PC-3 (cell line): ENCODE measurements at regions of chr14 and their contacts with region 1.

Region 1: GRCh38 chr14:70809543-70810244 is 381 bp upstream of the MAP3K9 start:
- DNase-seq: peak; percentile 98
- ATAC-seq: peak; percentile 89
- H3K4me3 ChIP-seq: peak overlapping the region; percentile 83
- H3K27ac ChIP-seq: peak overlapping the region; percentile 13
- H3K4me1 ChIP-seq: peaks cover 39% of the 10 kb centered on the region
- H3K27me3 ChIP-seq: no peaks in the 10 kb centered on the region
- CTCF ChIP-seq: no peak

Region 2: GRCh38 chr14:68896132-68896531 is 1913.6 kb before region 1 on chr14:
- CTCF ChIA-PET with region 1: no interaction called
- POLR2A ChIA-PET with region 1: interaction called, 13 read pairs
- intact Hi-C with region 1: no loop called
- DNase-seq: no peak
- ATAC-seq: no peak
- H3K4me3 ChIP-seq: no peak overlapping the region
- H3K27ac ChIP-seq: no peak overlapping the region
- H3K4me1 ChIP-seq: no peaks in the 10 kb centered on the region
- H3K27me3 ChIP-seq: no peaks in the 10 kb centered on the region
- CTCF ChIP-seq: peak; percentile 60

Region 3: DNA sequence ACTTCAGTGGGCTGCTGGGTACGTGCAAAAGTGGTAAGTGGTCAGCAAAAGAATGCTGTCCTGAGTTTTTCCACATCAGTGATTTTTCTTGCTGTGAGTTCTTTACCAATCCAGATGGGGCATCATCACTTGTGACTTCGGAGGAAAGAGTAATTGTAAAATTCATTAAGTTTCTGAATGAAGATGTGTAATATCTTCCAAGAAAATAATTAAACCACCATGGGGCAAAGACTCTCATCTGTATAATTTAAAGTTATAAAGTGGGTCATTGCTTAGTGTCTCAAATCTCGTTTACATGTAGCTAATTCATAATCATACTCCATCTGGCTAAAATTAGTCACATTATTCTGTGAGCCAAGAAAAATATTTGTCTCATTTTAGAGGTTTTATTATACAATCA is 198.5 kb before region 1 on chr14:
- CTCF ChIA-PET with region 1: no interaction called
- POLR2A ChIA-PET with region 1: no interaction called
- intact Hi-C with region 1: no loop called
- DNase-seq: no peak
- ATAC-seq: peak; percentile 14; the same call in 1 of the 2 replicates
- H3K4me3 ChIP-seq: no peak overlapping the region
- H3K27ac ChIP-seq: no peak overlapping the region
- H3K4me1 ChIP-seq: peaks cover under 1% of the 10 kb centered on the region; the same call in 1 of the 2 replicates
- H3K27me3 ChIP-seq: 0 out of 2 replicates have a peak, but pooled peaks cover 21% of the 10 kb centered on the region
- CTCF ChIP-seq: no peak

Region 4: GRCh38 chr14:70622111-70622712 is 187.5 kb before region 1 on chr14:
- CTCF ChIA-PET with region 1: interaction called, 13 read pairs
- POLR2A ChIA-PET with region 1: no interaction called
- intact Hi-C with region 1: loop called (anchors 2 kb)
- DNase-seq: peak; percentile 82
- ATAC-seq: peak; percentile 99
- H3K4me3 ChIP-seq: no peak overlapping the region
- H3K27ac ChIP-seq: no peak overlapping the region
- H3K4me1 ChIP-seq: peaks cover 5% of the 10 kb centered on the region; the same call in 1 of the 2 replicates
- H3K27me3 ChIP-seq: no peaks in the 10 kb centered on the region
- CTCF ChIP-seq: peak; percentile 94

Region 5: GRCh38 chr14:70754989-70755388 is 54.7 kb before region 1 on chr14:
- CTCF ChIA-PET with region 1: interaction called, 3 read pairs
- POLR2A ChIA-PET with region 1: no interaction called
- intact Hi-C with region 1: loop called (anchors 2 kb)
- DNase-seq: peak; percentile 98
- ATAC-seq: peak; percentile 99
- H3K4me3 ChIP-seq: no peak overlapping the region
- H3K27ac ChIP-seq: peak overlapping the region; percentile 59
- H3K4me1 ChIP-seq: peaks cover 33% of the 10 kb centered on the region
- H3K27me3 ChIP-seq: no peaks in the 10 kb centered on the region
- CTCF ChIP-seq: no peak

Region 6: GRCh38 chr14:70888681-70889175 is 79.0 kb after region 1 on chr14:
- CTCF ChIA-PET with region 1: no interaction called
- POLR2A ChIA-PET with region 1: interaction called, 23 read pairs
- intact Hi-C with region 1: no loop called
- DNase-seq: peak; percentile 12
- ATAC-seq: peak; percentile 12
- H3K4me3 ChIP-seq: no peak overlapping the region
- H3K27ac ChIP-seq: no peak overlapping the region
- H3K4me1 ChIP-seq: no peaks in the 10 kb centered on the region
- H3K27me3 ChIP-seq: peaks cover 16% of the 10 kb centered on the region; the same call in 1 of the 2 replicates
- CTCF ChIP-seq: no peak

Region 7: DNA sequence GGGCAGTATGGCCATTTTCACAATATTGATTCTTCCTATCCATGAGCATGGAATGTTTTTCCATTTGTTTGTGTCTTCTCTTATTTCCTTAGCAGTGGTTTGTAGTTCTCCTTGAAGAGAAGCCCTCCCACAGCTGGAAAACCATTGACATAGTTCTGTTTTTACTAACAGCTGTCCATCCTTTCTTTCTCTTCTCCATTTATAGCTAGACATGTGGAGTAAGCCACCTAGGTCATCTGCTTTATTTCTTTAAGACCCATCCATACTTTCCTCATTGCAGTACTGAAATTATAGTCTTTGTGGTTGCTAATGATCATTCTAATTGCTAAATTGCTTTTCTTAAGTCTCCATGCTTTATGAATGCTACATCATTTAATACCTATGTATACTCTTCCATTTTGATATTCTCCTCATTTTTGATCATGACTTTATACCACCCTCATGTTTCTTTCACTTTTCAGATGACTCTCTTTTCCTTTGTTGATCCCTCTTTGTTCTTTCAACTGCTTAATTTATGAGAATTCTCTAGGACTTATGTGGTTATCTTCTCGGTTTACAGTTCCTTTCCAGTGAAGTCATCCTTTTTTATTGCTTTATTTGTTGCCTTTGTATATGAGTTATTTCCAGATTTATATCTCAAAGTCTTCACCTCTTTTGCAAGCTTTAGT is 211.8 kb after region 1 on chr14:
- CTCF ChIA-PET with region 1: no interaction called
- POLR2A ChIA-PET with region 1: no interaction called
- intact Hi-C with region 1: no loop called
- DNase-seq: peak; percentile 96
- ATAC-seq: peak; percentile 95
- H3K4me3 ChIP-seq: peak overlapping the region; percentile 27
- H3K27ac ChIP-seq: peak overlapping the region; percentile 84
- H3K4me1 ChIP-seq: peaks cover 22% of the 10 kb centered on the region
- H3K27me3 ChIP-seq: no peaks in the 10 kb centered on the region
- CTCF ChIP-seq: no peak

Region 8: DNA sequence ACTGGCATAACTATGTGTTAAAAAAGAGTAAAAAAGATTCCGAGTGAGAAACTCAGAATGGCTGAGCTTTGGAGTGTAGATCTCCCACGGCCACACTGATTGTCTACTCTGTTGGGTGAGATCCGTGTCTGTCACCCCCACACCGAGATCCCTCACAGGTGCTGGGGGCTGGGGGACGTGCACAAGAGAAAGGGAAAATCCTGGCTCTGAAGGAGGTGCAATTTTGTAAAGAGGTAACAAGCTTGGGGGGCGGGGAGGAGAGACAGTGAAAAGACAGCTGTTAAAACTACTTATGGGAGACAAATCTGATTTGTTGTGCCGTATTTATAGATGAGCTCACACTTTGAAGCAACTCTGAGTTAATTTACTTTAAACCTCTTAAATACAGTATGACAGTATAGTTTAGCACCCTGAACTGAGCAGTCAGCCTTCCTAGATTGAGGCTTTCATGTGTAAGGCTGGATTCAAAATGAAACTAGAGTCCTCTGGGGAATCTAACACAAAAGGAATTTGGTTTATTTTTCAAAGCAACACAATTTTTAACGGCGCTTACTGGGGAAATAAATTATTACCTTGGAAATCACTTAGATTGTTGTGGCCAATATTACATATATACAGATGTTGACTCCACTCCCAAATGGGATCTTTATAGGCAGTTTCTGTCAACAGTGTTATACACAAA is 955.1 kb after region 1 on chr14:
- CTCF ChIA-PET with region 1: no interaction called
- POLR2A ChIA-PET with region 1: interaction called, 17 read pairs
- intact Hi-C with region 1: no loop called
- DNase-seq: no peak
- ATAC-seq: peak; percentile 57
- H3K4me3 ChIP-seq: peak overlapping the region; percentile 12; the same call in 1 of the 2 replicates
- H3K27ac ChIP-seq: no peak overlapping the region
- H3K4me1 ChIP-seq: no peaks in the 10 kb centered on the region
- H3K27me3 ChIP-seq: peaks cover 11% of the 10 kb centered on the region; the same call in 1 of the 2 replicates
- CTCF ChIP-seq: no peak